ENCODE measurements at regions of chr7 and their contacts with region 1.

Region 1: GRCh38 chr7:134605973-134606923 is 40.4 kb upstream of the BPGM start:
- DNase-seq: peak; percentile 65 to 85 (median 73)
- H3K4me3 ChIP-seq: peak overlapping the region in 2 of 7 experiments; percentile 25 to 47
- H3K27ac ChIP-seq: no peak overlapping the region
- H3K4me1 ChIP-seq: peaks cover 0 to 3% (median 0%) of the 10 kb centered on the region in 4 experiments
- H3K27me3 ChIP-seq: peaks cover 0 to 6% (median 4%) of the 10 kb centered on the region in 5 experiments

Region 2: GRCh38 chr7:134514663-134515062 is 91.6 kb before region 1 on chr7:
- CTCF ChIA-PET with region 1: interaction called, 46 read pairs
- POLR2A ChIA-PET with region 1: no interaction called
- DNase-seq: peak; percentile 71 to 84 (median 77)
- H3K4me3 ChIP-seq: no peak overlapping the region
- H3K27ac ChIP-seq: no peak overlapping the region
- H3K4me1 ChIP-seq: no peaks in the 10 kb centered on the region
- H3K27me3 ChIP-seq: peaks cover 0 to 5% (median 2%) of the 10 kb centered on the region in 5 experiments

Region 3: GRCh38 chr7:134547397-134548054 is 58.7 kb before region 1 on chr7:
- CTCF ChIA-PET with region 1: interaction called, 22 read pairs
- POLR2A ChIA-PET with region 1: no interaction called
- DNase-seq: peak; percentile 45 to 68 (median 65)
- H3K4me3 ChIP-seq: peak overlapping the region in 2 of 7 experiments; percentile 34 to 43
- H3K27ac ChIP-seq: no peak overlapping the region
- H3K4me1 ChIP-seq: peaks cover 0 to 4% (median 0%) of the 10 kb centered on the region in 4 experiments
- H3K27me3 ChIP-seq: peaks cover 0 to 5% (median 0%) of the 10 kb centered on the region in 5 experiments